SK-N-SH (cell line): ENCODE measurements at regions of chr9 and their contacts with region 1.

Region 1: DNA sequence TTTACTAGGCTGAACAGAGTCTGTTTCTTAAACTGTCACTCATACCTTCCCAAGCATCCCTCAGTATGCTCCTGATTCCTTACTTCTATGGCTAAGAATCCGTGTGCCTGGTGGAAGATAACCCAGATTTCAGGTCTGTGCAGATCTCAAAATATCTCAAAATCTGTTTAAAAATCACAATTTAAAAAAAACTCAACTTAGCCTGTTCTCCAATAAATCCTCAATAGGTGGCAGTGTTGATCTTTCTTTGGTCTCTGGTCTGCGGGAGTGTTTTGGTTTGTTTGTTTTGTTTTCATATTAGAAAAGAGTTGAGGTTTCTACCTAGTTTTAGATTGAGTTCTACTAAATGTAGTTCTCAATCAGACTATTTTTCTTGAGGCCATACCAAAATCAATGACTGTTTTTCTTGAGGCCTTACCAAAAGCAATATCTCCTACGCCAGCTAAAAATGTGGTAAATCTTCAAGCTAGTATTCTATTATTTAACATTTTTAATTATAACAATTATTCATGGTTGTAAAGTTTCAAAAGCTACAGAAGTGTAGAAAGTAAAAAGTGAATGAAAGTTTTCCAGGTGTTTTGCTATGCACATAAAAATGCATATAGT is 57.9 kb downstream of the TGFBR1 start:
- DNase-seq: peak; percentile 45
- H3K4me3 ChIP-seq: no peak overlapping the region
- H3K27ac ChIP-seq: no peak overlapping the region
- H3K4me1 ChIP-seq: peaks cover 0 to 6% of the 10 kb centered on the region in 2 experiments; a peak in 2 of 4 replicates
- H3K27me3 ChIP-seq: no peaks in the 10 kb centered on the region
- CTCF ChIP-seq: peak; percentile 81
- EP300 ChIP-seq: no peak
- RAD21 ChIP-seq: peak; percentile 93

Region 2: DNA sequence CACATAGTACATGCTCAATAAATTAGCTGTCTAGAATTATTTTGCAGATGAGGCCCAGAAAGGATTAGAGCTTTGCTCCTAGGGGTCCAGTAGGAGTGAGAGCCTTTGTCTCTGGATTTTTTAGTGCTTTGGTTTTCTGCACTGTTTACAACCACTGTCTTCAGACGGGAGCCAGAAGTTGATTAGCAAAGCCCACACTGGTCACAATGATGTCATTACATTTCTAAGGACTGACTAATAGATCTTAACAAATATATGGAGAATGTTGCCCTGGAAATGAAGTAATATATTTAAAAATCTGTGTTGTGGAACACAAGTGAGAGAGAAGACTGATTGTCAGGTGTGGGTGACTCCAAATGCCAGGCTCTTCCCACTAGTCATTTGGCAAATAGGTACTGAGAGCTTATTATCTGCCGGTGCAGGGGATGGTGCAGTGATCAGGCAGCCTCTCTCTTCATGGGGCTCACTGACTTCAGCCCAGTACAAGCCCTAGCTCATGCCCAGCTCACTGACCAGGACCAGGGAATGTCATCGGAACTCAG is 143.0 kb before region 1 on chr9:
- CTCF ChIA-PET with region 1: no interaction called
- POLR2A ChIA-PET with region 1: no interaction called
- DNase-seq: no peak
- H3K4me3 ChIP-seq: no peak overlapping the region
- H3K27ac ChIP-seq: peak overlapping the region in 1 of 2 experiments; percentile 91; a peak in 2 of 4 replicates
- H3K4me1 ChIP-seq: peaks cover 0 to 13% of the 10 kb centered on the region in 2 experiments; a peak in 1 of 4 replicates
- H3K27me3 ChIP-seq: no peaks in the 10 kb centered on the region
- CTCF ChIP-seq: no peak
- EP300 ChIP-seq: peak in 1 of 2 experiments; percentile 85; a peak in 1 of 4 replicates
- RAD21 ChIP-seq: no peak

Region 3: GRCh38 chr9:99307851-99308250 is 145.0 kb after region 1 on chr9:
- CTCF ChIA-PET with region 1: no interaction called
- POLR2A ChIA-PET with region 1: no interaction called
- DNase-seq: no peak
- H3K4me3 ChIP-seq: no peak overlapping the region
- H3K27ac ChIP-seq: no peak overlapping the region
- H3K4me1 ChIP-seq: no peaks in the 10 kb centered on the region
- H3K27me3 ChIP-seq: no peaks in the 10 kb centered on the region
- CTCF ChIP-seq: no peak
- EP300 ChIP-seq: no peak
- RAD21 ChIP-seq: no peak

Region 4: GRCh38 chr9:99416007-99416406 is 253.1 kb after region 1 on chr9:
- CTCF ChIA-PET with region 1: no interaction called
- POLR2A ChIA-PET with region 1: no interaction called
- DNase-seq: no peak
- H3K4me3 ChIP-seq: no peak overlapping the region
- H3K27ac ChIP-seq: peak overlapping the region; percentile 25 to 29; a peak in 3 of 4 replicates
- H3K4me1 ChIP-seq: peaks cover 15 to 35% of the 10 kb centered on the region in 2 experiments; a peak in 3 of 4 replicates
- H3K27me3 ChIP-seq: no peaks in the 10 kb centered on the region
- CTCF ChIP-seq: no peak
- EP300 ChIP-seq: no peak
- RAD21 ChIP-seq: no peak

Region 5: GRCh38 chr9:100011062-100011681 is 848.3 kb after region 1 on chr9:
- CTCF ChIA-PET with region 1: interaction called, 10 read pairs
- POLR2A ChIA-PET with region 1: no interaction called
- DNase-seq: peak; percentile 46
- H3K4me3 ChIP-seq: no peak overlapping the region; a peak in 1 of 4 replicates
- H3K27ac ChIP-seq: no peak overlapping the region
- H3K4me1 ChIP-seq: no peaks in the 10 kb centered on the region
- H3K27me3 ChIP-seq: no peaks in the 10 kb centered on the region
- CTCF ChIP-seq: peak; percentile 68
- EP300 ChIP-seq: no peak
- RAD21 ChIP-seq: peak; percentile 76